Caco-2 (cell line): ENCODE measurements at regions of chr1 and their contacts with region 1.

Region 1: GRCh38 chr1:109075531-109076490 is at the start of gene TAF13:
- DNase-seq: peak; percentile 89 to 91
- H3K4me3 ChIP-seq: peak within 1 kb of the TSS; percentile 71
- H3K4me3 Mint-ChIP-seq: peak within 1 kb of the TSS; percentile 95
- H3K27ac Mint-ChIP-seq: peak within 1 kb of the TSS; percentile 97
- H3K4me1 ChIP-seq: peaks cover under 1% of the 10 kb centered on the region; the same call in 1 of the 2 replicates
- H3K4me1 Mint-ChIP-seq: no peaks in the 10 kb centered on the region
- H3K27me3 ChIP-seq: no peaks in the 10 kb centered on the region
- H3K27me3 Mint-ChIP-seq: no peaks in the 10 kb centered on the region
- CTCF ChIP-seq: no peak
- total RNA-seq, gene TAF13: 21.9 and 25.1 TPM in 2 replicates

Region 2: DNA sequence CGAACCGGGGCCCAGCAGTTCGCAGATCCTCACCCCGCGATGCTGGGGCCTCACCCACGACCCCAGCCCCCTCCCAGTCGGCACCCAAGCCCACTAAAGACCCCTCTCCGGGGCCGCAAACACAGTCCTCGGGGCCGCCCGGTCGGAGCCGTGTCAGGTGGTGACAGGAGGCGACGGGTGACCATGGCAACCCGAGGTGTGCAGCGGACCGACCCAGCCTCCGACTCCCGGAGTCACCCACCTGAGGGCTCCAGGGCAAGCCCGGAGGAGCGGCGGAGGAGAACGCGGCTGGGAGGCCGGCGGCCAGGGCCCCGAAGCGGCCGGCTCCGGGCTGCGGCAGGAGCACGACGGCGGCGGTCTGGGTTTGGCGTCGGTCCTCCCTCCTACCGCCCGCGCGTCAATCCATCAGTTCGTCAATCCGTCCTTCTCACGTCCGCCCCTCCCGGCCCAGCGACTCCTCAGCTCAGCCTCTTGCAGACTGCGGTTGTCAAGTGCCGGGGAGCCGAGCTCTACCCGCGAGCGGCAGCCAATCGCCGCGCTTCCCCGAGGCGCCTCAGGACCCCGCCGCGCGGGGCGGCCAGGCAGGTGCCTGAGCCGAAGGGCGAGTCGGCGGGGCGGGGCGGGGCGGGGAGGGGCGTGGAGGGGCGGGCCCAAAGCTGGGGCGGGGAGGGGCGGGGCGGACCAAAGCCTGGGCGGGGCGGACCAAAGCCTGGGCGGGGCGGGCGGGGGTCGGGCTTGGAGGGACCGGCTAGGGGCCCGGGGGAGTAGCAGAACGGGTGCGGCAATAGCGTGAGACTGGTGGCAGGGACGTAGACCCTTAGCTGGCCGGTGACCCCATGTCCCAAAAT is 34.0 kb before region 1 on chr1 and contains the start of gene WDR47:
- CTCF ChIA-PET with region 1: no interaction called
- POLR2A ChIA-PET with region 1: interaction called, 5 read pairs
- intact Hi-C with region 1: loop called (anchors 2 kb)
- DNase-seq: peak; percentile 91 to 92
- H3K4me3 ChIP-seq: peak within 1 kb of the TSS; percentile 51
- H3K4me3 Mint-ChIP-seq: peak within 1 kb of the TSS; percentile 97
- H3K27ac Mint-ChIP-seq: peak within 1 kb of the TSS; percentile 74
- H3K4me1 ChIP-seq: no peaks in the 10 kb centered on the region
- H3K4me1 Mint-ChIP-seq: peaks cover 5% of the 10 kb centered on the region
- H3K27me3 ChIP-seq: no peaks in the 10 kb centered on the region
- H3K27me3 Mint-ChIP-seq: no peaks in the 10 kb centered on the region
- CTCF ChIP-seq: no peak
- total RNA-seq, gene WDR47: 3.6 and 3.7 TPM in 2 replicates

Region 3: GRCh38 chr1:109090196-109091077 is 14.6 kb after region 1 on chr1 and contains the start of gene TMEM167B:
- CTCF ChIA-PET with region 1: interaction called, 6 read pairs
- POLR2A ChIA-PET with region 1: interaction called, 10 read pairs
- intact Hi-C with region 1: no loop called
- DNase-seq: peak; percentile 85 to 92
- H3K4me3 ChIP-seq: peak within 1 kb of the TSS; percentile 48
- H3K4me3 Mint-ChIP-seq: peak within 1 kb of the TSS; percentile 96
- H3K27ac Mint-ChIP-seq: peak within 1 kb of the TSS; percentile 94
- H3K4me1 ChIP-seq: no peaks in the 10 kb centered on the region
- H3K4me1 Mint-ChIP-seq: peaks cover 6% of the 10 kb centered on the region
- H3K27me3 ChIP-seq: no peaks in the 10 kb centered on the region
- H3K27me3 Mint-ChIP-seq: no peaks in the 10 kb centered on the region
- CTCF ChIP-seq: no peak
- total RNA-seq, gene TMEM167B: 21.8 and 23.5 TPM in 2 replicates

Region 4: GRCh38 chr1:109099938-109100773 is 24.3 kb after region 1 on chr1:
- CTCF ChIA-PET with region 1: no interaction called
- POLR2A ChIA-PET with region 1: interaction called, 12 read pairs
- intact Hi-C with region 1: no loop called
- DNase-seq: peak; percentile 94 to 96
- H3K4me3 ChIP-seq: peak overlapping the region; percentile 84
- H3K4me3 Mint-ChIP-seq: peak overlapping the region; percentile 92
- H3K27ac Mint-ChIP-seq: peak overlapping the region; percentile 98
- H3K4me1 ChIP-seq: 0 out of 2 replicates have a peak, but pooled peaks cover 3% of the 10 kb centered on the region
- H3K4me1 Mint-ChIP-seq: no peaks in the 10 kb centered on the region
- H3K27me3 ChIP-seq: no peaks in the 10 kb centered on the region
- H3K27me3 Mint-ChIP-seq: no peaks in the 10 kb centered on the region
- CTCF ChIP-seq: peak; percentile 52 to 72

Region 5: DNA sequence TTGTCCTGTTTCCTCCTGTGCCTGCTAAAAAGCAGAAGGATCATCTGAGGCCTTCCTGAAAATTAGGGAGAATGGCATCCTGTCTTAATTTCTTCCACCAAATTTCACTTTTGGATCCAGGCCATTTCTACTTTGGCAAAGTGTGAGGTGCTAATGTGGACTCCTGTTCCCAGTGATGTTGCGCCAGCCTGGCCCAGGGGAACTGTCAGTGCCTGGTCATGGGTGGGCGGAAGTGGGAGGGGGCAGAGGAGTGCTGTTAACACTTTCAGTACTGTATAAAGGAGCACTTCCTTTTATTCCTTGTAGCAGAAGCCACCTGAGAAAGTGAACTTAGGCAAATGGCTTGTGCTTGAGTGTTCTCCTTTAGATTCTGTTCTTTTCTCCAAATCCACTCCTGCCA is 58.0 kb after region 1 on chr1:
- CTCF ChIA-PET with region 1: no interaction called
- POLR2A ChIA-PET with region 1: interaction called, 11 read pairs
- intact Hi-C with region 1: no loop called
- DNase-seq: no peak
- H3K4me3 ChIP-seq: no peak overlapping the region
- H3K4me3 Mint-ChIP-seq: no peak overlapping the region
- H3K27ac Mint-ChIP-seq: no peak overlapping the region
- H3K4me1 ChIP-seq: peaks cover 39% of the 10 kb centered on the region
- H3K4me1 Mint-ChIP-seq: peaks cover 18% of the 10 kb centered on the region
- H3K27me3 ChIP-seq: no peaks in the 10 kb centered on the region
- H3K27me3 Mint-ChIP-seq: no peaks in the 10 kb centered on the region
- CTCF ChIP-seq: no peak

Region 6: DNA sequence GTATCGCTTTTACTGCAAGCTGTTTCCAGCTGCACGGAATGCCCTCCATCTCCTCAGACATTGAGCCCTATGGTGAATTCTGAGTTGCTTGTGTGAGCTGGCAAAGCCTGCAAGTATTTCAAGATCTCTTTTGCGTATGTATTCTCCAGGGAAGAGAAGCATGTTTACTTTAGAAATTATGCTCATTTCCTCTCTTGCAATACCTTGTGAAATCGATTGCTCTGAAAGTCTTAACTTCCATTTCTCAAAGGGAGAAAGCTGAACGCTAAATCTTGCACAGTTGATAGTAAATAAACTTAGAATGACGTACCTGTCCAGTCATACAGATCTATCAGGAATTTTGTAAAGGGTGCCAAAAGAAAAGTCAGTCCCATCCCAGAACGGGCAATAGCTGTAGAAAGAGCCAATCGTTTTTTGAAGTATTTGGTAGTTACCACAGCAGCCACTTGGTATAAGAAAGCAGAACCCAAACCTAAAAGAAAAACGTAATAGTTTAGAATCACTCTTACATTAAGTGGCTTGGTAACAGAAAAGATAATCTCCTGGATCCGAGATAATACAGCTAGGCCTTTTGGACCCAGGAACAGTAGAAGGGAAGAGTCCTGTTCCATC is 1305.0 kb after region 1 on chr1:
- CTCF ChIA-PET with region 1: no interaction called
- POLR2A ChIA-PET with region 1: no interaction called
- intact Hi-C with region 1: no loop called
- DNase-seq: no peak
- H3K4me3 ChIP-seq: no peak overlapping the region
- H3K4me3 Mint-ChIP-seq: no peak overlapping the region
- H3K27ac Mint-ChIP-seq: no peak overlapping the region
- H3K4me1 ChIP-seq: no peaks in the 10 kb centered on the region
- H3K4me1 Mint-ChIP-seq: no peaks in the 10 kb centered on the region
- H3K27me3 ChIP-seq: no peaks in the 10 kb centered on the region
- H3K27me3 Mint-ChIP-seq: no peaks in the 10 kb centered on the region
- CTCF ChIP-seq: no peak